ENCODE measurements at regions of chr15 and their contacts with region 1.

Region 1: DNA sequence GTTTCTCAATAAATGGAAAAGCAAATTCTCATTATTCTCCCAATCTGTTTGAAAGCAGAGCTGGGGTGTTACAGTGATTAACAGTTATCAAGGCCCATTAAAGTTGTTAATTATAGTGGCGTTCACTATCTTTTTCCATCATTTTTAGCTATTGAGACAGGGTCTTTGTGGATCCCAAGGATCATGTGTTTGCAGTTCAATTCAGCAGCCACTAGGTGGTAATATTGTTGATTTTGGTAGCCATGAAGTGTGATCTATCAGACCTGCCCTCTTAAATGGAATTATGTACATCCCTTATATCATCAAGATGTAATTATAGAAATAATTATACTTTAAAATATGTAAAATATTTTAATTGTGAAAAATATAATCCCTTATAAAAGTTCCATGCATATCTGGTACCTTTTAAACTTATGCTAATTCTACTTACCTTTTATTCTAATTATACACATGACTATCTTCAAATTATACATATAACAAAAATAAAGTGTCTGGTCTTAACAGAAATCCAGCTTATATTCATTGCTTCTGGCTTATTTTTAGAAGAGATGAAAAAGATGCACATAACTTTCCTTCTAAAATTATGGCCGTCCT is 126.4 kb downstream of the GREM1 start:
- DNase-seq: peak; percentile 42
- ATAC-seq: peak; percentile 24
- H3K4me3 ChIP-seq: no peak overlapping the region
- H3K4me3 Mint-ChIP-seq: no peak overlapping the region
- H3K27ac ChIP-seq: no peak overlapping the region
- H3K27ac Mint-ChIP-seq: no peak overlapping the region
- H3K4me1 ChIP-seq: peaks cover 0 to 7% of the 10 kb centered on the region in 2 donors
- H3K4me1 Mint-ChIP-seq: peaks cover 10% of the 10 kb centered on the region
- H3K27me3 ChIP-seq: no peaks in the 10 kb centered on the region
- H3K27me3 Mint-ChIP-seq: peaks cover 14% of the 10 kb centered on the region
- CTCF ChIP-seq: peak; percentile 81

Region 2: GRCh38 chr15:32664796-32665195 is 179.4 kb before region 1 on chr15:
- CTCF ChIA-PET with region 1: interaction called, 28 read pairs
- POLR2A ChIA-PET with region 1: no interaction called
- intact Hi-C with region 1: loop called (anchors 10 kb)
- DNase-seq: no peak
- ATAC-seq: no peak
- H3K4me3 ChIP-seq: no peak overlapping the region
- H3K4me3 Mint-ChIP-seq: no peak overlapping the region
- H3K27ac ChIP-seq: no peak overlapping the region
- H3K27ac Mint-ChIP-seq: no peak overlapping the region
- H3K4me1 ChIP-seq: no peaks in the 10 kb centered on the region
- H3K4me1 Mint-ChIP-seq: no peaks in the 10 kb centered on the region
- H3K27me3 ChIP-seq: no peaks in the 10 kb centered on the region
- H3K27me3 Mint-ChIP-seq: no peaks in the 10 kb centered on the region
- CTCF ChIP-seq: no peak

Region 3: GRCh38 chr15:32857732-32858131 is 13.5 kb after region 1 on chr15:
- CTCF ChIA-PET with region 1: interaction called, 15 read pairs
- POLR2A ChIA-PET with region 1: no interaction called
- intact Hi-C with region 1: no loop called
- DNase-seq: no peak
- ATAC-seq: no peak
- H3K4me3 ChIP-seq: no peak overlapping the region
- H3K4me3 Mint-ChIP-seq: no peak overlapping the region
- H3K27ac ChIP-seq: no peak overlapping the region
- H3K27ac Mint-ChIP-seq: no peak overlapping the region
- H3K4me1 ChIP-seq: peaks cover 6 to 9% of the 10 kb centered on the region in 2 donors
- H3K4me1 Mint-ChIP-seq: peaks cover 12% of the 10 kb centered on the region
- H3K27me3 ChIP-seq: no peaks in the 10 kb centered on the region
- H3K27me3 Mint-ChIP-seq: peaks cover 6% of the 10 kb centered on the region
- CTCF ChIP-seq: no peak

Region 4: DNA sequence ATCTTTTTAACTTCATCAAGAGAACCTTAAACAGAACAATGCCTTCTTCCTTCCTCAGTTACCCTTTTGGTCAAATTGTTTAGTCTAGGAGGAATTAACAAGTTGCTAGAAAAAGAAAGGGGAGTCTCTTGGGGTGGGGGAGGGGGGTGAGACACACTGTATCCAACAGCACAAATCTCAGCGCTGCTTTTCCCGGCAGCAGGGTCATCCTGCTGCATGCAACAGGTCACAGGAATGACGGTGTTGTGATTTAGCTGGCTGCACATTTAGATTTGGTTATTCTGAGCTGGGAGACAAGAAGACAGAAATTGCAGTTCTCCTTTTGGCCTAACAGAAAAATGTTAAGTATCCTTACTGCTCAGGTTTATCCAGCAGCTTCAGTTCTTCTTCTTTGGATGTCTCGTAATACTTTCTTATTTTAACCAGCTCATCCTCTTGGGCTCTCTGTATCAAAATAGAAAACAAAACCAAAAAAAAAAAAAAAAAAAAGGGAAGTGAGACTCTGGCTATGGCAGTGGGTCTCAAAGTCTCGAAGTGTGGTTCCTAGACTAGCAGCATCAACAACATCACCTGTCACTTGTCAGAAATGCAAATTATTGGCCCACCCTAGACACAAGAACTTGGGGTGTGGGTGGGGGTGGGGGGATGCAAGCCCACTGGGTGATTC is 64.1 kb after region 1 on chr15:
- CTCF ChIA-PET with region 1: interaction called, 23 read pairs
- POLR2A ChIA-PET with region 1: no interaction called
- intact Hi-C with region 1: no loop called
- DNase-seq: peak; percentile 81
- ATAC-seq: peak; percentile 90
- H3K4me3 ChIP-seq: peak overlapping the region; percentile 14 to 58 (median 35)
- H3K4me3 Mint-ChIP-seq: peak overlapping the region; percentile 68
- H3K27ac ChIP-seq: peak overlapping the region; percentile 52 to 54
- H3K27ac Mint-ChIP-seq: peak overlapping the region; percentile 72
- H3K4me1 ChIP-seq: peaks cover 56 to 61% of the 10 kb centered on the region in 2 donors
- H3K4me1 Mint-ChIP-seq: peaks cover 70% of the 10 kb centered on the region
- H3K27me3 ChIP-seq: no peaks in the 10 kb centered on the region
- H3K27me3 Mint-ChIP-seq: no peaks in the 10 kb centered on the region
- CTCF ChIP-seq: no peak

Region 5: GRCh38 chr15:32946210-32946609 is 102.0 kb after region 1 on chr15:
- CTCF ChIA-PET with region 1: interaction called, 133 read pairs
- POLR2A ChIA-PET with region 1: no interaction called
- intact Hi-C with region 1: no loop called
- DNase-seq: no peak
- ATAC-seq: no peak
- H3K4me3 ChIP-seq: no peak overlapping the region
- H3K4me3 Mint-ChIP-seq: no peak overlapping the region
- H3K27ac ChIP-seq: no peak overlapping the region
- H3K27ac Mint-ChIP-seq: no peak overlapping the region
- H3K4me1 ChIP-seq: no peaks in the 10 kb centered on the region
- H3K4me1 Mint-ChIP-seq: no peaks in the 10 kb centered on the region
- H3K27me3 ChIP-seq: no peaks in the 10 kb centered on the region
- H3K27me3 Mint-ChIP-seq: peaks cover 11% of the 10 kb centered on the region
- CTCF ChIP-seq: no peak

Region 6: DNA sequence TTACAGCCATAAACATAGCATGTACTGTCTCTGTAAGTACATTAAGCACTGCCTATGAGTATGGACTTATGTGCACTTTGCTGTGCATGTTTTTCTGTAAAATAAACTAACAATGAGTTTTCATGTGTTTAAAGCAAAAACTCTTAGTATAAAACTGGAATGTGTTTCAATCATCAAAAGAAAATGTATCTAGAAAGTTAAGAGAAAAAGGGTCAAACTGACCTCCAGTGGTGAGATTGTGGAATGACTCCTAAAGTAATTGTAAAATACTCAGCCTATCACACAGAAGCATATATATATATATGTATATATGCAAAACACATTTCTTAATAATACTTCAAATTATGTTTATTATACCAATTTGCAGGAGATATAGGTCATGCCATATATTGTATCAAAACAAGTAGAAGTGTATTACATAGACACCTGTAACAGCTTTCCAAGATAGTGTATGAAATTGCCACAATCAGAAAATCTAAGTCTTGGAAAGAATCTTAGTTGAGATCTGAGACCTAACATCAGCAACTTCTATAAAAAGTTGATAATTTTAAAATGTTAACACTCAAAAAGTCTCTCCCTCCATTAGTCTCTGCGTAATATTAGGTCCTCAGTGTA is 150.7 kb after region 1 on chr15:
- CTCF ChIA-PET with region 1: interaction called, 70 read pairs
- POLR2A ChIA-PET with region 1: interaction called, 6 read pairs
- intact Hi-C with region 1: loop called (anchors 1 kb)
- DNase-seq: peak; percentile 49
- ATAC-seq: no peak
- H3K4me3 ChIP-seq: no peak overlapping the region
- H3K4me3 Mint-ChIP-seq: no peak overlapping the region
- H3K27ac ChIP-seq: no peak overlapping the region
- H3K27ac Mint-ChIP-seq: no peak overlapping the region
- H3K4me1 ChIP-seq: no peaks in the 10 kb centered on the region
- H3K4me1 Mint-ChIP-seq: no peaks in the 10 kb centered on the region
- H3K27me3 ChIP-seq: no peaks in the 10 kb centered on the region
- H3K27me3 Mint-ChIP-seq: peaks cover 24% of the 10 kb centered on the region
- CTCF ChIP-seq: peak; percentile 74

Region 7: DNA sequence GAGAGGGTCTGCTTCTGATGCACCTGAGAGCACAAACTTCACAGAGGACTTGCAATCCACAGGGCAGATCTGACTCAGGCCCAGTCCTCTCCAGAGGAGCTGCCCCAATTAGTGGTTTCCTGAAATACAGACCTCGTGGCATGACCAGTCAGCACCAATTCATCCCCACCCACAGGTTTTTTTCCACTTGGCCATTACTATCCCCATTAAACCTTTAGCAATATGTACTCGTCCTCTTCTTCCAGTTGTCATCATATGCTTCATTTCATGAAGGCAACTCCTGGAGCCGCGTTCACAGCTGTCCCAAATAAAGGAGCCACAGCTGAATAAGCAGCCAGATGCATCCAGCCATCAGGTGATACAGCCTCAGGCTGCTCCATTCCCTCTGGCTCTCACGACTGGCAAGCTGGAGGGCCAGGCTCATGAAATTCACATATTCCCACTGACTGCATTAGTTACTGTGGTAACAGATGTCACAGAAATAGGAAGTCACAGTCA is 187.2 kb after region 1 on chr15:
- CTCF ChIA-PET with region 1: no interaction called
- POLR2A ChIA-PET with region 1: no interaction called
- intact Hi-C with region 1: no loop called
- DNase-seq: no peak
- ATAC-seq: no peak
- H3K4me3 ChIP-seq: no peak overlapping the region
- H3K4me3 Mint-ChIP-seq: no peak overlapping the region
- H3K27ac ChIP-seq: no peak overlapping the region
- H3K27ac Mint-ChIP-seq: no peak overlapping the region
- H3K4me1 ChIP-seq: no peaks in the 10 kb centered on the region
- H3K4me1 Mint-ChIP-seq: no peaks in the 10 kb centered on the region
- H3K27me3 ChIP-seq: no peaks in the 10 kb centered on the region
- H3K27me3 Mint-ChIP-seq: peaks cover 8% of the 10 kb centered on the region
- CTCF ChIP-seq: no peak

Measured in B cell (primary cell).